Heart right ventricle (tissue), 16 donors: ENCODE measurements at regions of chr12 and their contacts with region 1.

Region 1: DNA sequence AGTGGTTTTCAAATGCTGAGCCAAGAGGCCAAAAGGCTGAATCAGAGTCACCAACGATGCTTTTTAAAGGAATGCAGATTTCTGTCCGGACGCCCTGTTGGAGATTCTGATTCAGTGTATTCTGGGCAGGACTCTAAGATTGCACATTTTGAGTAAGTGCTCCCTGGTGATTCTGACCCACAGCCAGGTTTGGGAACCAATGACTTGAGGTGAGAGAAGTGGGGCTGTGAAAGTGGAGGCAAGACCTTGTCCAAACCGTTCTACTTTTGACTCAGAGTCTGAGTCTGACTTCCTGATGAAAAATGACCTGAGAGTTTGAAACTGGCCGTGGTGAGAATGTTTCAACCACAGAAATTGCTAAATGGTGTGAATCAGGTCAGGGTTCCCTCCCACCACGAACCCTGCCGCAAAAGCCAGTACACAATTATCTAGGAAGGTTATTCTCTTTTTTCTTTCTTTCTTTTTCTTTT is 90.2 kb downstream of the NTN4 start:
- DNase-seq: no peak
- ATAC-seq: peak in 2 of 8 donors; percentile 7 to 15
- H3K4me3 ChIP-seq: no peak overlapping the region
- H3K27ac ChIP-seq: peak overlapping the region in 7 of 10 donors; percentile 10 to 81 (median 58)
- H3K4me1 ChIP-seq: peaks cover 0 to 47% (median 26%) of the 10 kb centered on the region in 9 donors
- H3K27me3 ChIP-seq: no peaks in the 10 kb centered on the region
- CTCF ChIP-seq: no peak

Region 2: DNA sequence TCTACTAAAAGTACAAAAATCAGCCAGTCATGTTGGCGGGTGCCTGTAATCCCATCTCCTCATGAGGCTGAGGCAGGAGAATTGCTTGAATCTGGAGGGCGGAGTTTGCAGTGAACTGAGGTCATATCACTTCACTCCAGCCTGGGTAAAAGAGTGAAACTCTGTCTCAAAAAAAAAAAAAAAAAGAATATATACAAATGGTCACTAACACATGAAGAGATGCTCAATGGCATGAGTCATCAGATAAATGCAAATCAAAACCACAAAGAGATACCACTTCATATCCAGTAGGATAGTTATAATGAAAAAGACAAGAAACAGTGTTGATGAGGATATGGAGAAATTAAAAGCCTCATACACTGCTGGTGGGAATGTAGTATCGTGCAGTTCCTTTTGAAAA is 259.9 kb before region 1 on chr12:
- intact Hi-C with region 1: no loop called
- DNase-seq: no peak
- ATAC-seq: no peak
- H3K4me3 ChIP-seq: no peak overlapping the region
- H3K27ac ChIP-seq: no peak overlapping the region
- H3K4me1 ChIP-seq: no peaks in the 10 kb centered on the region
- H3K27me3 ChIP-seq: peaks cover 0 to under 1% (median 0%) of the 10 kb centered on the region in 7 donors
- CTCF ChIP-seq: no peak

Region 3: GRCh38 chr12:95593266-95593871 is 107.0 kb before region 1 on chr12:
- intact Hi-C with region 1: loop called in 1 of 10 experiments (anchors 10 kb)
- DNase-seq: peak; percentile 44 to 86
- ATAC-seq: peak; percentile 91 to 98 (median 96)
- H3K4me3 ChIP-seq: no peak overlapping the region
- H3K27ac ChIP-seq: peak overlapping the region in 7 of 10 donors; percentile 2 to 68 (median 65)
- H3K4me1 ChIP-seq: peaks cover 2 to 23% (median 14%) of the 10 kb centered on the region in 9 donors
- H3K27me3 ChIP-seq: no peaks in the 10 kb centered on the region
- CTCF ChIP-seq: no peak

Region 4: GRCh38 chr12:95721350-95721749 is 21.0 kb after region 1 on chr12:
- intact Hi-C with region 1: no loop called
- DNase-seq: no peak
- ATAC-seq: no peak
- H3K4me3 ChIP-seq: no peak overlapping the region
- H3K27ac ChIP-seq: no peak overlapping the region
- H3K4me1 ChIP-seq: peaks cover 3 to 38% (median 17%) of the 10 kb centered on the region in 9 donors
- H3K27me3 ChIP-seq: no peaks in the 10 kb centered on the region
- CTCF ChIP-seq: peak in 3 of 9 donors; percentile 7 to 20 (median 13)

Region 5: DNA sequence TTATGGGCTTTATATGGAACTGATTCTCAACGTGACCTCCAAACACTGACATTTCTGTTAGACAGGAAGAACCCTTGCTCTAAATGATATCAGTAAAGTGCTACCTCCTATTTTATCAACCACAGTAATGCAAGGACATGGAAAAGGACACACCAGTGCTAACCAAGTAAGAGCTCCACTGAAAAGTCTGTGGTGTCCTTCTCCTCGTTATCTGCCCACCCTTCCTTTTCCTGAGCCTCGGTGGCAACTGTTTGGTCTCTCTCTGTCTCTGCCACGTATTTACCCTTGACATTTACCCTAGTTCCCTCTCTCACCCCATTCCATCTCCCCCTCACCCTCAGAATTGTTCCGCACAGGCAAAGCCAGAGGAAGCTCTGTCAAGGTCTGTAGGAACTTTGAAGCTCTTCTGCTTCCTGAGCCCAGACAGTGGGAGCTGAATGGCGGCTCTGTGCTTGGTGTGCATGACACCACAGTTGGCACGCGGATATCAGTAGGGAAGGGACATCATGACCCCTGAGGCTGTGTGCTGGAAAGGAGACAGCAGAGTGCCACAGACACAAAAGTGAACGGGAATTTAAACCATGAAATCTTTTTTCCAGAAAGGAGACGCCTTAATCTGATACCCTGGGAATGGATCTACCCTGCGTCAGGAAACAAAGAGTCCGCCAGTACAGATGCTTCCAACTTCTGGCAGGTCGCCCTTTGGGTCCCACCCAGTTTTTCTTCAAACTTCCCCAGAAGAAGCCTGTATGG is 39.4 kb after region 1 on chr12:
- intact Hi-C with region 1: loop called in 1 of 10 experiments (anchors 5 kb)
- DNase-seq: peak; percentile 67 to 71
- ATAC-seq: peak; percentile 70 to 92 (median 89)
- H3K4me3 ChIP-seq: peak overlapping the region in 3 of 10 donors; percentile 0 to 14 (median 4)
- H3K27ac ChIP-seq: peak overlapping the region; percentile 70 to 94 (median 87)
- H3K4me1 ChIP-seq: peaks cover 14 to 83% (median 43%) of the 10 kb centered on the region in 9 donors
- H3K27me3 ChIP-seq: no peaks in the 10 kb centered on the region
- CTCF ChIP-seq: no peak